BJ (cell line): ENCODE measurements at regions of chr16 and their contacts with region 1.

Region 1: GRCh38 chr16:25114121-25114520 is 2.6 kb downstream of the LCMT1 start:
- DNase-seq: no peak
- H3K4me3 ChIP-seq: no peak overlapping the region
- H3K27me3 ChIP-seq: no peaks in the 10 kb centered on the region
- CTCF ChIP-seq: no peak

Region 2: DNA sequence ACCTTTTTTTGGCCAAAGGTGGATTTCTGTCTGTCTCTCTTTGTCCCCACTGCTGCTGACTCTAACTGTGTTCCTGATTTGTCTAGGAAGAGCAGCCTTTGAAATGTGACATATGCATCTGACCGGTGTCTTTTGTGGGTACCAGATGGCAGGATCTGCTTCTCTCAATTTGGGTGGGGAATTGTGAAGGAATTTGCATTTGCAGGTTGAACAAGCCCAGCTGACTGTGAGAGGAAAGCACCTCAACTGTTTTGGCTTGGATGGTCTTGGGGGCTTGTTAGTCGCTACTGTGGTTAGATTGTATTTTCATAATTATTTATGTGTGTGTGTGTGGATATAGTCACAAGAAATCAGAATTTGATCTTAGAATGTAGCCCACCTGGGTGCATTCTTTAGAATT is 40.3 kb before region 1 on chr16:
- CTCF ChIA-PET with region 1: no interaction called
- POLR2A ChIA-PET with region 1: no interaction called
- DNase-seq: no peak
- H3K4me3 ChIP-seq: no peak overlapping the region
- H3K27me3 ChIP-seq: no peaks in the 10 kb centered on the region; the same call in 1 of the 2 replicates
- CTCF ChIP-seq: no peak

Region 3: DNA sequence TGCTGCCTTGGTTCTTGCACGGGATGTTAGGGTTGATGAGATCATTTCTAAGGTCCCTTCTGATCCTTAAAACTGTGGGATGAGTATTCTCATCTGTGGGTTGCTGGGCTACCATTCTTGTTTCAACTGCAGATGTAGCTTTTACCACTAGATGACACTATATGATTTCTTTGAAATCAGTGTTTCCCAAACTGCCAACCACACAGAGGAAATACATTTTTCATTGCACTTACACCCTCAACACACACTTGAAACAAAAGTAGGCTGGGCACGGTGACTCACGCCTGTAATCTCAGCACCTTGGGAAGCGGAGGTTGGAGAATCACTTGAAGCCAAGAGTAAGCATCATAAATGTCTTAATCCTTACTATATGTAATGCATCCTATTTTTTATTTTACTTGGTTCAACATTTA is 12.7 kb after region 1 on chr16:
- CTCF ChIA-PET with region 1: interaction called, 15 read pairs
- POLR2A ChIA-PET with region 1: no interaction called
- DNase-seq: peak; percentile 34
- H3K4me3 ChIP-seq: no peak overlapping the region
- H3K27me3 ChIP-seq: no peaks in the 10 kb centered on the region
- CTCF ChIP-seq: peak; percentile 77

Region 4: GRCh38 chr16:25177831-25178688 is 63.9 kb after region 1 on chr16:
- CTCF ChIA-PET with region 1: no interaction called
- POLR2A ChIA-PET with region 1: no interaction called
- DNase-seq: no peak
- H3K4me3 ChIP-seq: no peak overlapping the region
- H3K27me3 ChIP-seq: no peaks in the 10 kb centered on the region
- CTCF ChIP-seq: no peak